AG04449 (cell line): ENCODE measurements at regions of chr19 and their contacts with region 1.

Region 1: DNA sequence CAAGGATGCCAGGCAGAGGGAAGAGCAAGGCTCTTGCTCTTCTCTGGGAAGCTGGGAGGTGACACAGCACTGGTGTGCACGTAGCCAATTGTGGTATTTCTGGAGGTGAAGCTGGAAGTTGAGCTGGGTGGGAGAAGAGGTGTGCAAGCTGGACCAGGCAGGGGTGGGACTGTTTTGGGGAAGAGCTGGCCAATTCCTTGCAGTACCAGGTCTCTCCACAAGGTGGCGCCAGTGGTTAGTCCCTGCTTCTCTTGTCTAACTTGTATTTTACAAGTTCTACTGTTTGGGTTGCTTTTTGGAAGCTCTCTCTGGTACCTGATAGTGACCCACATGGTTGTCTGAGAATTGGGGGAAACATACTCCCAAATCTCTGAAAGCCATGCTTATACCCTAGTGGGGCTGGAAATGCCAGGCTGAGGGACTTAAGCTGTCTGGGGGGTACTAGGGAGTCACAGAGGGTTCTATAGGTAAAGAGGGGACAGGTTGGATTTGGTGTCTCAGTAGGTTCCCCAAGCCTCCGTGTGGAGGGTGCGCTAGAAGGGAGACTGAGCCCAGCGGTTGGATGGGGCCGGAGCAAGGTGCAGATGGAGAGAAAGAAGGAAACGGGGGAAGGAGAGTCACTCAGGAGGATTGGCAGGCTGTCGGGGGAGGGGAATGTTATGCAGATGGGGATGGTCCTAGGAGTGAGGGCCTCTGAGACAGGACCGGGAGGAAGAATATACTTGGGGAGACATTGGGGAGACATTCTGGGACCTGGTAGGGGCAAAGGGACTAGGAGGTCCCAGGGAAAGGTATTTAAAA is 3.0 kb downstream of the HPN start:
- DNase-seq: no peak
- H3K4me3 ChIP-seq: no peak overlapping the region
- CTCF ChIP-seq: peak; percentile 84

Region 2: DNA sequence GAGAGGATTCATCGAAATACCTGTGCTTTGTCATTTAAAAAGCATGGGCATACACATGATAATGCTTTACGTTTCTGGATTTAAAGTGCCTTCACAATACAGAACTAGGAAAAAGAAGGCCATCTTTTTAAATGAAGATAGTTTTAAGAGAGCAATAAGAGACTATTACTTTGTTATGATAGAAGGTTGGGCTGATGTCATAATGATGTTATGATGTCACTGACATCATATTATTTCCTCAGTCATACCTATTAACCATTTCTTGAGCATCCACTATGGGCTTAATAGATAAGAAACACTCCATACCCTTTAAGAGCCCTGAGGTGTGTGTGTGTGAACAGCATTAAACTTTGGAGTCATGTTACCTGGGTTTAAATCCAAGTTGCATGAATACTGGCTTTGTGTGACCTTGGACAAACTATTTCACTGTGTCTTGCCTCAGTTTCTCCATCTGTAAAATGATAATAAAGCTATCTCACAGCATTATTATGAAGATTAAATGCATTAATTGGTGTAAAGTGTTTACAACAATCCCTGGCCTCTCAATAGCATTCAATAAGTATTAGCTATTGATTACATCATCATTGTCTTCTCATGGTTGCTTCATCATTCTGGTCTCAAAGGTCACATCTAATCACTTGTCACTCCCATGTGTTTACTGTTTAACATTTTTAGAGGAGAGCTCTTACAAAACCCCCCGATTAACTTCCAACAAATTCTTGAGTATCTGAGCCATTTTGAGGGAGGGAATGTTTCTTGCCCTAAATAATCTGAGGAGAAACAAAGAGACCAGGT is 299.4 kb before region 1 on chr19:
- CTCF ChIA-PET with region 1: no interaction called
- POLR2A ChIA-PET with region 1: no interaction called
- DNase-seq: no peak
- H3K4me3 ChIP-seq: no peak overlapping the region
- CTCF ChIP-seq: no peak

Region 3: DNA sequence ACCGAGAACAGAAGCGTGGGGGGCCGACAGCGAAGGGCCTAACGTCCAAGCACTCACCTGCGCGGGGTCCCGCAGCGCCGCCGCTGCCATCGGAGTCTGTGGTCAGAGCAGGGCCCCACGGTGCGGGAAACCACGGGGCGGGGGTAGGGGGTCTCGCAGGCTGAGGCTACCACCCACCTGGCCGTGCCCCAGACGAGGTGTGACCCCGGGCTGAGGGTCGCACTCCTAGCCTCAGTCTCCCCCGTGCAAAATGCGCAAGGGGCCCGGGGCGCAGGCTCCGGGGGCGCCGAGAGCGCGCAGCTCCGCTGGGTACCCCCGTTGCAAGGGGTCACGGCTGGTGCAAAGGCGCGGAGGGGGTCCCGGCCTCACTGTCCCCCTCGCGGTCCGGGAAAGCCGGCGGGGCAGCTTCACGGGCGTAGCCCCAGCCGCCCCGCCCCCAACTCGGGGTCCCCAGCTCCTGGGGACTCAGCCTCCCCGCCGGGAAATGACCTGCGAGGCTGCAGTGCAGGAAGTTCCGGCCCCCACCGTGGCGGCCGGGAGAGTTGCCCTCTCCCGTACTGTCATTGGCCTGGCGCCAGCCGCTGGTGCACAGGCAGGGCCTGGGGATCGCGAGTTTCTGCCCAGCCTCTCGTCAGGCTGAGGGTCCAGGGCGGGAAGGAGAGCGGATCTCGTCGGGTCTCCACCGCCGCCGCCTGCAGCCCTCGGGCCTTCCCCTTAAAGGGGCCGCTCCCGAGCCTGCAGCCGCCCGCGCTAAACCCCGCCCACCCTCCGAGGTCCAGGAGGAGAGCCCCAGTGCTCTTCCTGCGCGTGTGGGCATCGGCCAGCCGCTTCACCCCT is 80.7 kb before region 1 on chr19 and contains the start of gene ZNF792:
- CTCF ChIA-PET with region 1: no interaction called
- POLR2A ChIA-PET with region 1: no interaction called
- DNase-seq: no peak
- H3K4me3 ChIP-seq: peak within 1 kb of the TSS; percentile 75
- CTCF ChIP-seq: no peak

Region 4: GRCh38 chr19:34999498-35000341 is 44.8 kb before region 1 on chr19 and contains the start of gene GRAMD1A:
- CTCF ChIA-PET with region 1: interaction called, 13 read pairs
- POLR2A ChIA-PET with region 1: no interaction called
- DNase-seq: no peak
- H3K4me3 ChIP-seq: peak within 1 kb of the TSS; percentile 73
- CTCF ChIP-seq: no peak

Region 5: DNA sequence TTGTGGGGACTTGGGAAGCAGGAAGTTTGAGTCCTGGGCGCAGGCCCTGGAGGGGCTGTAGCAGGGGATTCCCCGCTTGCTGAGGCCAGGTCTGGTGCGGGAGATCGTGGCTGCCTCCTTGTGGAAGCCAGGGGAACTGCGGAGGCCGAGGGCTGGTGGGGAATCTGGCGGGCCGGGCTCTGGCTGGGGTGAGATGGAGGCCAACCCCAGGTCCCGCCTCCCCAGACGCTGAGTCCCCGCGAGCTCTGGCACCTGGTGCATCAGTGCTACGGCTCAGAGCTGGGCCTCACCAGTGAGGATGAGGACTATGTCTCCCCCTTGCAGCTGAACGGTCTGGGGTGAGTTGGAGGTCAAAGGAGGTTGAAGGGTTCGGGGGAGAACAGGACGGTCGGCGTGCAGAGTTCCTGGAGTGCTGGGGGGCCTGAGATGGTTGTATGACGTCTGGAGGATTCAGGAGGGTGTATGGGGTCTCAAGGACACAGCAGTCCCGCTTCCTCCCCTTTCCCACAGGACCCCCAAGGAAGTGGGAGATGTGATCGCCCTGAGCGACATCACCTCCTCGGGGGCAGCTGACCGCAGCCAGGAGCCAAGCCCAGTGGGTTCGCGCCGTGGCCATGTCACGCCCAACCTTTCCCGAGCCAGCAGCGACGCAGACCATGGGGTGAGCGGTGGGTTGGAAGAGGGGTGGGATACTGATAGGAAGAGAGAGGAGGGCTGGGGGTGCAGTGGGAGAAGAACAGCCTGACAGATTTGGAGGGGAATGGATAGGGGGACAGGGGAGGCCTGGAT is 31.3 kb before region 1 on chr19:
- CTCF ChIA-PET with region 1: interaction called, 17 read pairs
- POLR2A ChIA-PET with region 1: no interaction called
- DNase-seq: no peak
- H3K4me3 ChIP-seq: no peak overlapping the region
- CTCF ChIP-seq: peak; percentile 96

Region 6: GRCh38 chr19:35055715-35056179 is 11.2 kb after region 1 on chr19:
- CTCF ChIA-PET with region 1: interaction called, 98 read pairs
- POLR2A ChIA-PET with region 1: no interaction called
- DNase-seq: no peak
- H3K4me3 ChIP-seq: no peak overlapping the region
- CTCF ChIP-seq: no peak

Region 7: GRCh38 chr19:35090506-35091237 is 46.2 kb after region 1 on chr19:
- CTCF ChIA-PET with region 1: interaction called, 22 read pairs
- POLR2A ChIA-PET with region 1: no interaction called
- DNase-seq: no peak
- H3K4me3 ChIP-seq: no peak overlapping the region
- CTCF ChIP-seq: peak; percentile 41

Region 8: GRCh38 chr19:35135389-35135909 is 90.9 kb after region 1 on chr19:
- CTCF ChIA-PET with region 1: interaction called, 67 read pairs
- POLR2A ChIA-PET with region 1: no interaction called
- DNase-seq: no peak
- H3K4me3 ChIP-seq: no peak overlapping the region
- CTCF ChIP-seq: peak; percentile 92